GM12878 (cell line): ENCODE measurements at regions of chr5 and their contacts with region 1.

Region 1: GRCh38 chr5:39231705-39232525 is 12.6 kb upstream of the FYB1 start:
- DNase-seq: peak; percentile 73
- ATAC-seq: peak; percentile 78
- H3K4me3 ChIP-seq: no peak overlapping the region
- H3K27ac ChIP-seq: no peak overlapping the region
- H3K4me1 ChIP-seq: no peaks in the 10 kb centered on the region
- H3K27me3 ChIP-seq: no peaks in the 10 kb centered on the region
- CTCF ChIP-seq: no peak
- EP300 ChIP-seq: no peak
- POLR2A ChIP-seq: no peak
- RAD21 ChIP-seq: no peak

Region 2: GRCh38 chr5:39256477-39257235 is 24.7 kb after region 1 on chr5:
- CTCF ChIA-PET with region 1: interaction called, 6 read pairs
- POLR2A ChIA-PET with region 1: interaction called, 4 read pairs
- RAD21 ChIA-PET with region 1: interaction called, 9 read pairs
- SMC1A ChIA-PET with region 1: interaction called, 38 read pairs
- in situ Hi-C with region 1: no loop called
- intact Hi-C with region 1: no loop called
- DNase-seq: peak; percentile 56
- ATAC-seq: peak; percentile 93
- H3K4me3 ChIP-seq: no peak overlapping the region
- H3K27ac ChIP-seq: peak overlapping the region; percentile 48; the same call in 1 of the 2 replicates
- H3K4me1 ChIP-seq: no peaks in the 10 kb centered on the region
- H3K27me3 ChIP-seq: no peaks in the 10 kb centered on the region
- CTCF ChIP-seq: no peak
- EP300 ChIP-seq: no peak
- POLR2A ChIP-seq: no peak
- RAD21 ChIP-seq: no peak

Region 3: DNA sequence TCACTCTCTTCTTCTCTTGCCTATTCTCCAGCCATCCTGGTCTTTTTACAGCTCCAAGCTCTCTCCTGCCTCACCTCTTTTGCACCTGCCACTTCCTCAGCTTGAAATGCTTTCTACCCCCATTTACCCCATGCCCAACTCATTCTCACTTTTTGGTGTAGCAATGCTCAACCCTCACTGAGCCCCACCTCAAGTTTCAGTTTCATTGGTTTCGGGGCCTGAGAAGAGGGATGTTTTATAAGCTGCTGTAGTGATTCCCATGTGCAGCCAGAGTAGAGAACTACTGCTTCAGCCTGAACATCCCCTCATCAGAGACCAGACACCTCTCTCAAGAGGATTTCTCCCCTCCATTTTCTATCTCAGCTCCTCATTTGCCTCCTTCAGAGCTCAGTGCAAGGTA is 32.6 kb after region 1 on chr5:
- CTCF ChIA-PET with region 1: interaction called, 6 read pairs
- POLR2A ChIA-PET with region 1: interaction called, 4 read pairs
- RAD21 ChIA-PET with region 1: interaction called, 14 read pairs
- SMC1A ChIA-PET with region 1: interaction called, 50 read pairs
- in situ Hi-C with region 1: no loop called
- intact Hi-C with region 1: no loop called
- DNase-seq: peak; percentile 69
- ATAC-seq: peak; percentile 96
- H3K4me3 ChIP-seq: no peak overlapping the region
- H3K27ac ChIP-seq: peak overlapping the region; percentile 56
- H3K4me1 ChIP-seq: 0 out of 2 replicates have a peak, but pooled peaks cover 2% of the 10 kb centered on the region
- H3K27me3 ChIP-seq: no peaks in the 10 kb centered on the region
- CTCF ChIP-seq: no peak
- EP300 ChIP-seq: no peak
- POLR2A ChIP-seq: no peak
- RAD21 ChIP-seq: no peak

Region 4: DNA sequence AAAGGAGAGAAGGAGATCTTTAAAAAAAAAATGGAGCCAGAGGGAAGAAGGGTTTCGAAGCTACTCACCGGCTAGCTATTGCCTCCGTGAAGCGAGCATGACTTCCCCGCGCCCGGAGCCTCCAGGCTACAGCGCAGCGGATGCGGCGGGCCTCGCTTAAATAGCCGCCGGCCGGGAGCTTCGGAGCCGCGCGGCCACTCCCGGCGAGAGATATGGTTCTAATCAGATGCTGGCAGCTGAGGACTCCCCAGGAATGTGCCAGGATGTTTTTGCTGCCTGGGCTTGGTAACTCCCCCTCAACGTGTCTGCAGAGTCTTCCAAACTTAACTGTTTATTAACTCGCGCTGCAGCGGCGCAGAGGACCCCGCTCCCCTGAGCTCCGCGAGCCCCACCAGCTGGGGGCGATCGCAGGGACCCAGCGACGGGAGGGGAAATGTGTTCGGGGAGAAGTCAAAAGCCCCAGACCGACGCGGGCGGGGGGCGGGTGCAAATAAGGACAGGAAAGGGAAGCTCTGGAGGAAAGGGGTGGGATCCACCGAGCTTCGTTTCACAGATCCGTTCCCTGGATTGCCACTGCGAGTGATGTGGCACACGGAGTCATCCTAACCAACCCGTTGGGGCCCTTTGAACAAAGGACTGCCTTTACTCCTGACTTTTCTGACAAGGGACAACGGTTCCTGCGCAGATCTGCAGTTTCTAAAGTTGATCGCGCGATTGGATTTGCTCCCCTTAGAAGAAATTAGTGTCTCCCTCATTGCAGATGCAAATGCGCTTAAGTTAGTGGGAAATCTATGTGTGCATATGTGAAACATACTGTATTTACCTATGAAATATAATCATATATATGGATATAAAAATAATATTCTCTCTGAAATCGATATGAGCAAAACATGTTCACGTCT is 193.1 kb after region 1 on chr5 and contains the start of gene DAB2:
- CTCF ChIA-PET with region 1: no interaction called
- POLR2A ChIA-PET with region 1: no interaction called
- RAD21 ChIA-PET with region 1: no interaction called
- SMC1A ChIA-PET with region 1: no interaction called
- in situ Hi-C with region 1: no loop called
- intact Hi-C with region 1: no loop called
- DNase-seq: no peak
- ATAC-seq: peak; percentile 38; the same call in 2 of the 3 replicates
- H3K4me3 ChIP-seq: no peak within 1 kb of the TSS
- H3K27ac ChIP-seq: no peak within 1 kb of the TSS
- H3K4me1 ChIP-seq: no peaks in the 10 kb centered on the region
- H3K27me3 ChIP-seq: peaks cover 5 to 13% of the 10 kb centered on the region in 2 experiments
- CTCF ChIP-seq: no peak
- EP300 ChIP-seq: no peak
- POLR2A ChIP-seq: no peak
- RAD21 ChIP-seq: no peak
- polyA plus RNA-seq, gene DAB2: not detected